Right lobe of liver (tissue), 6 donors: ENCODE measurements at regions of chr17 and their contacts with region 1.

Region 1: DNA sequence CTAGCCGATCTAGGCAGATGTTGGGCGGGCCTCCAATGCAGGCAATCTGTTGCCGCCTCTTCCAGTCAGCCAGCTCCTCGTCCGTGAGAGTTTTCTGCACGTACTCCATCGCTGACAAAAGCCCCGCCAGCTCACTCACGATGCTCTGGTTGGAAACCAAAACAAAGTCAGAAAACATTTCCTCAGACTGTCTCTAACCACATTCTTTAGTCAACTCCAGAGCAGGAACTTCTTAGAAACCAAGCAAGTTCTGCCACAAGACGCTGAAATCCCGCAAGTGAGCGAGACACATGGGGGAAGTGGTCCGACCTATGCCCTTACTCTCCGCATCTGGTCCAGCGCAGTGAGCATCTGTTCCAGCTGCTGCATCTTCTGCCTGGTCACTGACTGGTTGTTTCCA is 49.1 kb downstream of the STAT5A start:
- DNase-seq: no peak
- ATAC-seq: peak in 2 of 4 donors; percentile 15 to 40
- H3K4me3 ChIP-seq: no peak overlapping the region
- H3K27ac ChIP-seq: no peak overlapping the region
- H3K4me1 ChIP-seq: no peaks in the 10 kb centered on the region
- H3K27me3 ChIP-seq: no peaks in the 10 kb centered on the region
- CTCF ChIP-seq: no peak
- POLR2A ChIP-seq: no peak

Region 2: GRCh38 chr17:42484304-42484703 is 146.9 kb after region 1 on chr17:
- intact Hi-C with region 1: loop called in 1 of 2 experiments (anchors 10 kb)
- DNase-seq: peak in 1 of 3 donors; percentile 54
- ATAC-seq: peak; percentile 85 to 94 (median 86)
- H3K4me3 ChIP-seq: no peak overlapping the region
- H3K27ac ChIP-seq: no peak overlapping the region
- H3K4me1 ChIP-seq: peaks cover 0 to 10% (median 3%) of the 10 kb centered on the region in 4 donors
- H3K27me3 ChIP-seq: no peaks in the 10 kb centered on the region
- CTCF ChIP-seq: no peak
- POLR2A ChIP-seq: no peak